Activated CD4-positive, alpha-beta memory T cell treated with anti-CD3 and anti-CD28 coated beads, Interleukin-2, amount 10 ng/mL, durations not matched to agents 7 days and 5 days (primary cell): ENCODE measurements at regions of chr1 and their contacts with region 1.

Region 1: GRCh38 chr1:44819608-44820327 is 11.4 kb downstream of the BTBD19 start:
- DNase-seq: peak; percentile 87
- H3K4me3 Mint-ChIP-seq: peak overlapping the region; percentile 85
- H3K27ac Mint-ChIP-seq: peak overlapping the region; percentile 98
- H3K4me1 Mint-ChIP-seq: peaks cover 45% of the 10 kb centered on the region
- H3K27me3 Mint-ChIP-seq: no peaks in the 10 kb centered on the region

Region 2: DNA sequence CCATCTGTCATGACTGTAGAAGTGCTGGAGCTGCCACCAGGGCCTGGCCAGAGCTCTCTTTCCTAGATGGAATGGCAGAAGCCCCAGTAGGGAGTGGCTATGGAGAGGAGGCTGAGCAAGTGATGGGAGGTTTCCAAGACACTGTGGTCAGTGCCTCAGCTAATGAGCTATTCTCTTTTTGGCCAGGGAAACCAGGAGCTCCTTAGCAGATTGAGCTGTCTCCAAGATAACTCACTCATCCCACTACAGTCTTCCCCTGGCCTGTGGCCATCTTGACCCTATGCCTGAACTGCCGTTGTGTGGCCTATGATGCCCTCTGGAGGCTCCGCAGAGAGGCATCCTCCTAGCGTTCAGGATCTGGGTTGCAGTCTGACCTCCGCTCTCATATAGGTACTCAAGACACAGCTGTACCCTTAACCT is 525.2 kb before region 1 on chr1:
- CTCF ChIA-PET with region 1: no interaction called
- POLR2A ChIA-PET with region 1: no interaction called
- DNase-seq: no peak
- H3K4me3 Mint-ChIP-seq: no peak overlapping the region
- H3K27ac Mint-ChIP-seq: no peak overlapping the region
- H3K4me1 Mint-ChIP-seq: no peaks in the 10 kb centered on the region
- H3K27me3 Mint-ChIP-seq: no peaks in the 10 kb centered on the region

Region 3: DNA sequence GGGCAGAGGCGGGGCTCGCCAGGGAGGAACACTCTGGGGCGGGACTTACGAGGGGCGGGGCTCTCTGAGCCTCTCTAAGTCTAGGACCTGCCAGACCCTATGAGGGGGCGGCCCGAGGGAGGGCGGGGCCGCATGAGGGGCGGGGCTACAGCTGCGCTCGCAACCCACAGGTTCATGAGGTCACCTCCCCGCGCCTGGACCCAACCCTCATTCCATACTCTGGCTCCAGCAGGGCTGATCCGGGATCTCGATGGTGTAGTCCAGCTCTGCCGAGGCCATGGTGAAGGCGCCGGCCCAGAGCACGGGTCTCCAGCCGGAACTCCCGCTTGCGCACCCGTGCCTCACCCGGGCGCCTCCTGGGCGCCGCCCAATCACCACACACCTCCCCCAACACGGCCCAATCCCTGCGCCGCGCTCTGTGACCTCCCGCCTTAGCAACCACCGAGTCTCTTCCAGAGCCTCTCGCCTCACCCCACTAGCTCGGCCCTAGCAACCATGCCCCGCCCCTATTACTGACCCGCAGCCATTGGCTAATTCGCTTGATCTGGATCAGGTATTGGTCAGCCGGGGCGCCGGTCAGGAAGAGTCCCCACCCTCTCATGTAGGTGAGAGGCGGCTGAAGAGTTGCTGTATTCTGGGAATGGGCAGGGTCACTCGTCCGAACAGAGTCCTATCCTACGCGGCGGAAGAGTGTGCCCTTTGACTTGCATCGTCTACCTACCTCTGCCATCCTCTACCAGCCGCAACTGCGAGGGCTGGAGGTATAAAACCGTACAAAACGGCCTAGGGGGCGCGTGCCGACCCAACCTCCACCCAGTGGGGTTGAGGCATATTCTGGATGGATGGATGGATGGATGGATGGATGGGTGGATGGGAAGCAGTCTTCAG is 145.4 kb before region 1 on chr1 and contains the starts of genes ARMH1 and TMEM53:
- CTCF ChIA-PET with region 1: no interaction called
- POLR2A ChIA-PET with region 1: interaction called, 11 read pairs
- DNase-seq: peak; percentile 99
- H3K4me3 Mint-ChIP-seq: peak within 1 kb of the TSS; percentile 83
- H3K27ac Mint-ChIP-seq: peak within 1 kb of the TSS; percentile 79
- H3K4me1 Mint-ChIP-seq: peaks cover 32% of the 10 kb centered on the region
- H3K27me3 Mint-ChIP-seq: no peaks in the 10 kb centered on the region
- total RNA-seq, gene ARMH1: 20.8 to 21.2 TPM
- total RNA-seq, gene TMEM53: 4.3 to 5.6 TPM

Region 4: GRCh38 chr1:44786138-44786840 is 33.5 kb before region 1 on chr1:
- CTCF ChIA-PET with region 1: interaction called, 16 read pairs
- POLR2A ChIA-PET with region 1: interaction called, 195 read pairs
- DNase-seq: peak; percentile 78
- H3K4me3 Mint-ChIP-seq: peak overlapping the region; percentile 59
- H3K27ac Mint-ChIP-seq: no peak overlapping the region
- H3K4me1 Mint-ChIP-seq: peaks cover 36% of the 10 kb centered on the region
- H3K27me3 Mint-ChIP-seq: no peaks in the 10 kb centered on the region

Region 5: DNA sequence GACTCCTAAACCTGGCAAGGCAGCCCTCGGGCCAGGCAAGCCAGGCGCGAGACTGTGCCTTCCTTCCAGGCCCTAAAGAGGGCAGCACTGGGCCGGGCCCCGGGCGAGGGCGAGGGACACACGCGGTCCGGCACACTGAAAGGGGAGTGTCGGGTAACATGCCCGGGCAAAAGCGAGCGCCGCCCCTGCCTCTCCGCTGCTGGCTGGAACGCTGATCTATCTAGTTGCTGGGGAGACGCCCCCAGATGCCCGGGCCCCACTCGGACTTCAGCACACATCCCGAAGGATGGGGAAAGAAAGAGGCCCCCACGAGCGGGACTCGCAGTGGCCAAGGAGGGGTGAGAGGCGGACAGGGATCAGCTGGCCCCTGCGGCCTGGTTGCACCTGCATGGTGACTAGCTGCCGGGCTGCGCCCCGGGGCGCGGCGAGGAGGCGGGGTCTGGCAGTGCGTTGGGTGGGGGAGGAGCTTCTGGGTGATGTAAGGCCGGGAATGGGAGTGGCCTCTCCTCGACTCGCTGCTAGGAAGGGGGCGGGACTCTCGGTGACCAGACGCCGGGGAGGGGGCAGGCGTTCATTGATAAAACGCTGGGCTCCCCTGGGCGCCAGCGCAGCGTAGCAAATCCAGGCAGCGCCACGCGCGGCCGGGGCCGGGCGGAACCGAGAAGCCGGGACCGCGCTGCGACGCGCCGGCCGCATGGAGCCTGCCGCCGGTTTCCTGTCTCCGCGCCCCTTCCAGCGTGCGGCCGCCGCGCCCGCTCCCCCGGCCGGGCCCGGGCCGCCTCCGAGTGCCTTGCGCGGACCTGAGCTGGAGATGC is 19.8 kb before region 1 on chr1 and contains the start of gene PLK3:
- CTCF ChIA-PET with region 1: interaction called, 76 read pairs
- POLR2A ChIA-PET with region 1: interaction called, 960 read pairs
- DNase-seq: peak; percentile 98
- H3K4me3 Mint-ChIP-seq: peak within 1 kb of the TSS; percentile 90
- H3K27ac Mint-ChIP-seq: peak within 1 kb of the TSS; percentile 98
- H3K4me1 Mint-ChIP-seq: peaks cover 47% of the 10 kb centered on the region
- H3K27me3 Mint-ChIP-seq: no peaks in the 10 kb centered on the region
- total RNA-seq, gene PLK3: 62.8 to 63.5 TPM

Region 6: GRCh38 chr1:44835738-44836675 is 16.2 kb after region 1 on chr1:
- CTCF ChIA-PET with region 1: interaction called, 6 read pairs
- POLR2A ChIA-PET with region 1: interaction called, 38 read pairs
- DNase-seq: peak; percentile 90
- H3K4me3 Mint-ChIP-seq: no peak overlapping the region
- H3K27ac Mint-ChIP-seq: no peak overlapping the region
- H3K4me1 Mint-ChIP-seq: peaks cover 7% of the 10 kb centered on the region
- H3K27me3 Mint-ChIP-seq: peaks cover under 1% of the 10 kb centered on the region

Region 7: DNA sequence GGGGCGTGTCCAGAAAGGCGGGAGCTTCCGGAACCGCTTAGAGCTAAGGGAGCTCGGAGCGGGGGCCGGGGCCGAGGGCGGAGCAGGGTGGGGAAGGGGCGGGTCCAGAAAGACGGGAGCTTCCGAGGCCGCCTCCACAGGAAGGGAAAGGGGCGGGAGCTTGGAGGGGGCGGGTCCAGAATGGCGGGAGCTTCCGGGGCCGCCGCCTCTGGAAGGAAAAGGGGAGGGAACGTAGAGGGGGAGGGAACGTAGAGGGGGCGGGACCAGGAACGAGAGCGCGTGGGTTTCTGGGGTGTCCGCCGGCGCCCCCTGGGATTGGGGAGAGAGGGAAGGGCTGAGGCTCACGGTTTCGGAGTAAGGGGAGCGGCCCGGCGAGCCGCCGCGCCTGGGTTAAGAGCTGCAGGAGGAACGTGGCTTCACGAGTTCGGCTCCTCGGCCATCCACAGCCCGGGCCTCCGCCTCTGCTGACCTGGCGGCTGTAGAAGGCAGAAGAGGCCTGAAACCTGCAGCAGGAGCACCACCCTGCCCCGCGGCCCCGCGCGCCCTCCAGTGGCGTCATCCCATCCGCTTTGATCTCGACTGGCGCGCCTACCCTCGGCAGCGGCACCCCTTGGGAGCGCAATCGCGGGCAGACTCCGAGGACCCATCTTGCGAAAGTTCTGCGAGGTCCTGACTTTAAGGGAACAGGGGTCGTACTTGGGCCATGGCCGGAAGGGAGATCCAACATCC is 484.0 kb after region 1 on chr1:
- CTCF ChIA-PET with region 1: interaction called, 3 read pairs
- POLR2A ChIA-PET with region 1: interaction called, 10 read pairs
- DNase-seq: peak; percentile 99
- H3K4me3 Mint-ChIP-seq: peak overlapping the region; percentile 83
- H3K27ac Mint-ChIP-seq: peak overlapping the region; percentile 86
- H3K4me1 Mint-ChIP-seq: peaks cover 44% of the 10 kb centered on the region
- H3K27me3 Mint-ChIP-seq: no peaks in the 10 kb centered on the region

Region 8: GRCh38 chr1:45430490-45430889 is 610.7 kb after region 1 on chr1:
- CTCF ChIA-PET with region 1: no interaction called
- POLR2A ChIA-PET with region 1: no interaction called
- DNase-seq: no peak
- H3K4me3 Mint-ChIP-seq: no peak overlapping the region
- H3K27ac Mint-ChIP-seq: no peak overlapping the region
- H3K4me1 Mint-ChIP-seq: no peaks in the 10 kb centered on the region
- H3K27me3 Mint-ChIP-seq: no peaks in the 10 kb centered on the region